ENCODE measurements at regions of chr14 and their contacts with region 1.

Region 1: DNA sequence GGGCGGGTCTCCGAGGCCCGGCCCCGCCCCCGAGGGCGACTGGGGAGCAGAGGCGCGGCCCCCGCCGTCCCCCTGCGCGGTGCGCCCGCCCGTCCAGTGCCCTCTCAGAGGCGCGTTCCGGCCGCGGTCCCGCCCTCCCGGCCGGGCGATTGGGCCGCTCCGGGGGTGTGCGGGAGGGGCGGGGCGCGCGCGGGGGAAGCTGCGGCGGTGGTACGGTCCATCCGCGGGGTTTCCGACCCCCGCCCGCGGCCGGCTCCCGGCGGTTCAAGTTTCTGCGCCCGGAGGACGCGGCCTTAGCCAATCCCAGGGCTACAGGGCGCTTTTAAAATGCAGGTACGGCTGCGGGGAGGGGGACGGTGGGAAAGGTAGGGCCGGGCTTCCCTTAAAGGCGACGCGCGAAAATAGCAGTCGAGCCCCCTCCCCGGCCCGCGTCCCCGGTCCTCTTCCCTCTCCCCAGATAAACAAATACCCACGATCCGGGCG is 317 bp upstream of the CCDC85C start:
- DNase-seq: peak; percentile 91 to 95
- ATAC-seq: peak; percentile 75 to 88
- H3K4me3 ChIP-seq: peak overlapping the region; percentile 81
- H3K27ac ChIP-seq: peak overlapping the region; percentile 87 to 99
- H3K4me1 ChIP-seq: peaks cover 47% of the 10 kb centered on the region
- CTCF ChIP-seq: no peak
- EP300 ChIP-seq: no peak
- POLR2A ChIP-seq: no peak
- RAD21 ChIP-seq: no peak

Region 2: GRCh38 chr14:99480917-99481744 is 123.2 kb before region 1 on chr14 and contains the start of gene CCNK:
- CTCF ChIA-PET with region 1: interaction called, 3 read pairs
- POLR2A ChIA-PET with region 1: interaction called, 10 read pairs
- DNase-seq: peak; percentile 99 to 100
- ATAC-seq: peak; percentile 89 to 95
- H3K4me3 ChIP-seq: peak within 1 kb of the TSS; percentile 94
- H3K27ac ChIP-seq: peak within 1 kb of the TSS; percentile 88 to 96
- H3K4me1 ChIP-seq: peaks cover 28% of the 10 kb centered on the region
- CTCF ChIP-seq: no peak
- EP300 ChIP-seq: no peak
- POLR2A ChIP-seq: peak; percentile 93
- RAD21 ChIP-seq: no peak
- polyA plus RNA-seq, gene CCNK: 22.7 and 38.9 TPM in 2 replicates

Region 3: DNA sequence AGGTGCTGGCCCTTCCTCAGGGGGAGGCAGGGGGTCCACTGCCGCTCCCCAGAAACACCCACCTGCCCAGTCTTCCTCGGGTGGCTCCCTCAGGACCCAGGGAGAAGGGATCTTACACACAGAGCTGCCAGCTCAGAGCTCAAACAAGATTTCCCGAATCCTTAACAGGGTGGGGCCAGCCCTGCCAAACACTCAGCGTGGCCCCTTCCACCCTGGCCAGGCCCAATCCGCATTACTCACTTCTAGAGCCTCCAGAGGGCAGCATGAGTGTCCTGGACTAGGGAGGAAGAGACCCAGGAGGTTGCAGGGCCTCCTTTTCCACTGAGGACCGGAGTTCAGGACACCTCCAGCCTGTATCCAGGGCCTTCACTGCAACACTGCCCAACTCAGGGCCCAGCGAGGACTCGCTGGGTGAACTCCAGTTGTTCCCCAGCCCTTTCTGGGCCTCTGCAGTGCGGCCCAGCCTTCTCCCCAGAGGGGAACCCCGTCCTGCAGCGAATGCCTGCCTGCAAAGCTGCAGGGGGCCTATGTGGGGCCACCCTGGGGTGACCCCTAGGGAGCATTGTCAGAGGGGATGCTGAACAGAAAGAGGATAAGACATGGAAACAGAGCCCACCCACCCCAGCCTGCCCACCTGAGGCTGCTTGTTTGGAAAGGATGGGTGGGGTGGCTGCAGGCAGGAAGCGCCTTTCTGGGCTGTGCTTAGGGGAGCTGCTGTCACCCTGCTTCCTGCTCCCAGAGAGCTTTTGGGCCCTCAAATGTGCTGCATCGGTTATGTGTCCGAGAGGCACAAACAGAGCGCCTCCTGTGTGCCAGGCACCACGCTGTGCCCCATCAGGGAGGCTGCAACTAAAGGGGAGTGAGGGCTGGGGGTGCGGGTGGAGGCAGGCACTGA is 79.3 kb before region 1 on chr14:
- CTCF ChIA-PET with region 1: interaction called, 75 read pairs
- POLR2A ChIA-PET with region 1: no interaction called
- DNase-seq: peak; percentile 62 to 64
- ATAC-seq: peak; percentile 62 to 81
- H3K4me3 ChIP-seq: no peak overlapping the region
- H3K27ac ChIP-seq: peak overlapping the region; percentile 62 to 90; a peak in 5 of 6 replicates
- H3K4me1 ChIP-seq: peaks cover 57% of the 10 kb centered on the region
- CTCF ChIP-seq: peak; percentile 55
- EP300 ChIP-seq: no peak
- POLR2A ChIP-seq: no peak
- RAD21 ChIP-seq: peak; percentile 61 to 65

Region 4: DNA sequence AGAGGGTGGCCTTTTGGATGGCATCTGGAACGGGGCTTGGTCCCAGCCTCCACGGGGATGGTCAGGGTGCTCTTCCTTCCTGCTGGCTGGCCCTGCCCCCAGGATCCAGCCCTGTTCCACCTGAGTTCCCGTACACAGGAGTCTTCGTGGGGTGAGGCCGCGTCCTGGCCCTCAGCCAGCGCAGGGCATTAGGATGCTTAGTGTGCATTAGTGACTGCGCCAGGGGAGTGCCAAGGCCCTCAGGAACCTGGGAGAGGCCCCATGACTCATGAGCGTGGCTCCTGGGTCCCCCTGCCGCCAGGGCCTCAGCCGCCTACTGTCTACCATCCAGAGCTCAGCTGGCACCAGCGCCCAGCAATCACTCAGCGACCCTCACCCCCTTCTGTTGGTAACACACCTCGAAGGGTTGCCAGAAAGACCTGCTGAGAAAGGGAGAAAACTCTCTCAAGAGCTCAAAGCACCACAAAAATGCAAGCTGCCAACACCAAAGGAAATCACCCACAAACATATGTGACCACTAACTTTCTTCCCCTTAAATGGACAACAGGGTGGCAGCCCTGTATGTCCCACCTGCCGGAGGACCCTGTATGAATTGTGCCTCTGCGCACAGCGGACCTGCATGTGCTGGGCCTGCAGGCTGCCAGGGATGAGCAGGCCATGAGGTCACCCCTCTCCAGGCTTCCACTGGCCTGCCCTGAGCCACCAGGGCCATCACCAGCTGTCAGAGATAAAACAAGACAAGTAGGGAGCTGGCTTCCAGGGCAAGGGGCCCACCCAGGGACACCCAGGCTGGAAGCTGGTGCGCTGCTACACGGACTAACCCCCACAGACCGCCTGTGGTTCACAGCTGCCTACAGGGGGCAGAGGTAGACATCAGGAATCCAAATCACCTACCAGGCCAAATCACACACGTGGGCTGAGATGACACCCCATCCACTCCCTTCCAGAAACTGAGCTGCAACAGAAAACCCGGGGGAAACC is 29.0 kb before region 1 on chr14:
- CTCF ChIA-PET with region 1: interaction called, 34 read pairs
- POLR2A ChIA-PET with region 1: interaction called, 25 read pairs
- DNase-seq: peak; percentile 58 to 81
- ATAC-seq: peak; percentile 51 to 65
- H3K4me3 ChIP-seq: peak overlapping the region; percentile 21
- H3K27ac ChIP-seq: peak overlapping the region; percentile 78 to 92
- H3K4me1 ChIP-seq: peaks cover 100% of the 10 kb centered on the region
- CTCF ChIP-seq: peak; percentile 39; the same call in 2 of the 3 replicates
- EP300 ChIP-seq: peak in 1 of 2 experiments; percentile 45; a peak in 1 of 5 replicates
- POLR2A ChIP-seq: no peak
- RAD21 ChIP-seq: peak in 1 of 2 experiments; percentile 37; a peak in 1 of 5 replicates

Region 5: DNA sequence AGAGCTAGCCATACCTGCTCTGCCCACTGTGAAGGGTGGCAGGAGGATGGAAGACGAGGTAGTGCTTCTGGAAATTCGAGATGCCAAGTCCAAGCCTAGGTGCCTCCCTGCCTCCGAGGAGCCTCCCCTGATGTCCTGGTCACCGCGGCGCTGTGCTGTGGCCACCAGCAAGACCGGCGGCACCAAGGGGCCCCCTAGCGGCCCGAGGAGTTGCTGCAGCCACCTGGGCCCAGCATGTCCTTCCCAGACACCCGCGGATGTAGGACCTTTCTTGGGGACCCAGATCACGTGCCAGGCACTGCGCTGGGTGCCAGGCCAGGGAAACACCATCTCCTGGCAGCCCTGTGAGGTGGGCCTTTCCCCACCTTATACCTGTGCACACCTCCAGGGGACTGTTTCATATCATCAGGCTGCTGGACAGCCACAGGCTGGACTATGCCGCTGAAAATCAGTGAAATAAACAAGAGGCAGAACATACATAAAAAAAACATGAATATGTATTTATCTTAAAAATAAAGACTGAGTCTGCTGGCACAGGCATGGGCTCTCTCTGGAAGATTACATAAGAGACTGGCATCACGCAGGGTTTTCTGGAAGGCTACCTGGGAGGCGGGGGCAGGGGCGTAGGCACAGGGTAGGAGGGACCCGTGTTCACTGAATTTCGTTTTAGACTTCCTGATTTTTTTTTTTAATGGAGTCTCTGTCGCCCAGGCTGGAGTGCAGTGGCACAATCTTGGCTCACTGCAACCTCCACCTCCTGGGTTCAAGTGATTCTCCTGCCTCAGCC is 24.7 kb after region 1 on chr14:
- CTCF ChIA-PET with region 1: interaction called, 71 read pairs
- POLR2A ChIA-PET with region 1: no interaction called
- DNase-seq: peak; percentile 80 to 89
- ATAC-seq: peak; percentile 91 to 97
- H3K4me3 ChIP-seq: no peak overlapping the region
- H3K27ac ChIP-seq: peak overlapping the region in 1 of 2 experiments; percentile 64; a peak in 2 of 6 replicates
- H3K4me1 ChIP-seq: 0 out of 3 replicates have a peak, but pooled peaks cover 3% of the 10 kb centered on the region
- CTCF ChIP-seq: peak; percentile 96
- EP300 ChIP-seq: no peak
- POLR2A ChIP-seq: no peak
- RAD21 ChIP-seq: peak; percentile 96 to 98

Region 6: DNA sequence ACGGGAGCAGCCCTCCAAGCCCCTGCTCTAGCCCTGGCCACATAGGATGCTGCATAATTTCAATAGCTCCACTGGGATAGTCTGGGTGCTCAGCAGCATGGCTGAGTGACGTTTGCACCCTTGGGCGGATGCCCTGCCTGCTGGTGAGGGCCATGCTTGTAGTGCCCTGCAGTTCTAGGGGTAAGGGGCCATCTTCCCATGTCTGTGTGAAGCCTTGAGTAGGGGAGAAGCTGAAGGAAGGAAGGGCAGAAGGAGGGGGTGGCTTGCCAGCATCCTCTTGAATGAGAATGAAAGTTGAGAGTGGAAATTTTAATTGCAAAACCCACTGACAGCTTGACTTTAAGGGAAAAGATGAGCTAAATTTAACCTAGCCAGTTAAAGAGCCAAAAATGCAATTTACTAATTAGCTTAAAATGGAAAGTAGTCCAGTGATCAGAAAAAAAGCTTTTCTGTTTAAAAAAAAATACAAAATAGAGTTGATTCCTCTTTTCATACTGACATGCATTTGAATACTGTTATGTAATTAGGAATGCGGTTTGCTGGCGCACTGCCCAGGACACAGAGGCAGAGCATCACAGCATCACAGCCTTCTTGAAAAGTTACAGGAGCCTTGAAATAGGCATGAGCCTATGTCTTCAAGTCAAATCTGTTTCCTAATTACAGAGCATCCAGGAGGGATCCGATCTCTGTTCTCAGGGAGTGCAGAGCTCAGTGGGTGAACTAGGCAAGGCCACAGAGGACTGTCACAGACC is 170.4 kb after region 1 on chr14:
- CTCF ChIA-PET with region 1: no interaction called
- POLR2A ChIA-PET with region 1: no interaction called
- DNase-seq: no peak
- ATAC-seq: no peak
- H3K4me3 ChIP-seq: no peak overlapping the region
- H3K27ac ChIP-seq: no peak overlapping the region
- H3K4me1 ChIP-seq: no peaks in the 10 kb centered on the region; the same call in 2 of the 3 replicates
- CTCF ChIP-seq: no peak
- EP300 ChIP-seq: no peak
- POLR2A ChIP-seq: no peak
- RAD21 ChIP-seq: no peak